ENCODE measurements at regions of chr7 and their contacts with region 1.

Region 1: DNA sequence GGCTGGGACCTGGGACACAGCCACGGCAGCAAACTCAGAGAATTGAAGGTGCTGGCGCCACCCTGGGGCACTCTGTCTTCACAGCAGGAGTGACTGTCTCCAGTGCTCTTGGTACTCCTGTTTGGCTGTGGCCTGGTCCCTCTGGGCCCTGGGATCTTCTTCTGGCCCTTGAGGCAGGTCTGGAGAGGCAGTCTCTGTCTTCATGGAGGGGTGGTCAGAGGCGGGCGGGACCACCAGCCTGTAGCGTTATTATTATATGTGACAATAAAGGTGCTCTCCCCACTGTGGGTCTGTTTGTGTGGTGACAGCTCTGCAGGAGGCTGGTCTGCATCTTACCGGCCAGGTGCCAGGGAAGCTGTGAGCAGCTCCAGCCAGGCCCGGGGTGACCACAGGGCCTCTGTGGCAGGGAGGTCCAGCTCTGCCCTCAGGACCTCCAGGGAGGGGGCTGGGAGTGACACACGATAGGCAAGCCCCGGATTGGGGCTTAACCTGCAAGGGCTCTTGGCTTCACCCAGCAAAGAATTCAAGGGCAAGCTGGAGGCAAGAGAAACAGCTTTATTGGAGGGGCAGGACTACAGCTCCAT is 70.3 kb downstream of the MYL10 start:
- DNase-seq: no peak
- H3K4me3 ChIP-seq: no peak overlapping the region
- H3K27me3 ChIP-seq: peaks cover 10% of the 10 kb centered on the region
- CTCF ChIP-seq: 0 out of 2 replicates have a peak, but pooled peaks have one; percentile 16

Region 2: GRCh38 chr7:101575721-101576120 is 16.9 kb after region 1 on chr7:
- CTCF ChIA-PET with region 1: interaction called, 10 read pairs
- POLR2A ChIA-PET with region 1: no interaction called
- DNase-seq: peak; percentile 37
- H3K4me3 ChIP-seq: no peak overlapping the region
- H3K27me3 ChIP-seq: peaks cover 1% of the 10 kb centered on the region; the same call in 1 of the 2 replicates
- CTCF ChIP-seq: no peak

Region 3: DNA sequence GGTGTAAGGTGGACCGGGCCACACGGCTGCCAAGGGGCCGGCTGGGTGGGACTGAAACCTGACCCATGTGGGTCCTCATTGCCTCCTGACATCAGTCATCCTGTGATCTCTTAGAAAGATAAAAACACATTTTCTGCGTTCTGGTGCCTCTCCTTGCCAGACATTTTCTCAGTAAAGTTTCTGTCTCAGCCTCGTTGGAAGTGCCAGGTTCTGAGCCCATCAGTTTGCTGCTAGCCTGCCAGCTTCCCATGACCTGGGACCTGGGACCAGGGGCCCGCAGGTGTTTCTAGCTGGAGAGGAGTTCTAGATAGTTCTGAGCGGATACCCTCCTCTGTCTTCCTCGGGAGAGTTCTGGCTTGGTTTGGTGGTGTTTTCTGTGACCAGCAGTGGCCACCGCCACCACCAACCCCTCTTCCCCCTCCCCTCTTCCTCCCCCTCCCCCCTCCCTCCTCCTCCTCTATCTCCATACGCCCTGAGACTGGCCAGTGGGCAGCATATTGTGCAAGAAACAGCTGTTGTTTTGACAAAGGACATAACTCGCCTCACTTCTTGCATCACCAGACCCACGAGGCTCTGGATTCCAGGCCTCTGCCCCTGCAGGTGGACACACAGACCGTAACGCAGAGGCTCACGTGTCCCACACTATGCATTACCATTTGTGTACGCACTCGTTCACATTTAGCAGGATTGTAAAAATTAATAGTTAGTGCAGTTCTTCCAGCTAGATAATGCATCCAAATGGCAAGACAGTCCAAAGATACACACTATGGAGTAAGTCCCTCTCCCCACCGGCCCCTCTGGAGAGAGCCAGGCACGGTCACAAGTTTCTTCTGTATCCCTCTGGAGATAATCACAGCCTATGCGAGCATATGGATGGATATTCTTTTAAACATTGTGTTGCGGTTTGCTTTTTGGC is 353.2 kb after region 1 on chr7:
- CTCF ChIA-PET with region 1: no interaction called
- POLR2A ChIA-PET with region 1: no interaction called
- DNase-seq: no peak
- H3K4me3 ChIP-seq: no peak overlapping the region
- H3K27me3 ChIP-seq: no peaks in the 10 kb centered on the region
- CTCF ChIP-seq: 0 out of 2 replicates have a peak, but pooled peaks have one; percentile 8